Transverse colon (tissue), 4 donors: ENCODE measurements at regions of chr2 and their contacts with region 1.

Region 1: GRCh38 chr2:70964596-70965386 is 13.6 kb upstream of the ANKRD53 start:
- DNase-seq: peak; percentile 83
- H3K4me3 ChIP-seq: peak overlapping the region; percentile 26 to 50 (median 32)
- H3K27ac ChIP-seq: no peak overlapping the region
- H3K4me1 ChIP-seq: peaks cover 0 to 5% (median 2%) of the 10 kb centered on the region in 4 donors
- H3K27me3 ChIP-seq: peaks cover 33% of the 10 kb centered on the region
- CTCF ChIP-seq: peak; percentile 58 to 83 (median 80)
- EP300 ChIP-seq: no peak
- POLR2A ChIP-seq: no peak

Region 2: GRCh38 chr2:70994756-70995729 is 30.3 kb after region 1 on chr2 and contains the start of gene TEX261:
- in situ Hi-C with region 1: no loop called
- intact Hi-C with region 1: loop called (anchors 5 kb)
- DNase-seq: peak; percentile 93
- H3K4me3 ChIP-seq: peak within 1 kb of the TSS; percentile 55 to 100 (median 99)
- H3K27ac ChIP-seq: peak within 1 kb of the TSS; percentile 81 to 91 (median 86)
- H3K4me1 ChIP-seq: peaks cover 11 to 26% (median 19%) of the 10 kb centered on the region in 4 donors
- H3K27me3 ChIP-seq: no peaks in the 10 kb centered on the region
- CTCF ChIP-seq: peak; percentile 42 to 64 (median 53)
- EP300 ChIP-seq: no peak
- POLR2A ChIP-seq: no peak
- total RNA-seq, gene TEX261: 14.6 to 34.5 (median 30.5) TPM

Region 3: GRCh38 chr2:72678024-72678423 is 1713.2 kb after region 1 on chr2:
- in situ Hi-C with region 1: no loop called
- intact Hi-C with region 1: no loop called
- DNase-seq: no peak
- H3K4me3 ChIP-seq: no peak overlapping the region
- H3K27ac ChIP-seq: no peak overlapping the region
- H3K4me1 ChIP-seq: peaks cover 0 to 17% (median 7%) of the 10 kb centered on the region in 4 donors
- H3K27me3 ChIP-seq: no peaks in the 10 kb centered on the region
- CTCF ChIP-seq: no peak
- EP300 ChIP-seq: no peak
- POLR2A ChIP-seq: no peak